GM12878 (cell line): ENCODE measurements at regions of chr9 and their contacts with region 1.

Region 1: GRCh38 chr9:100216178-100216787 is 117.2 kb downstream of the INVS start:
- DNase-seq: peak; percentile 40
- ATAC-seq: peak; percentile 96
- H3K4me3 ChIP-seq: no peak overlapping the region
- H3K27ac ChIP-seq: no peak overlapping the region
- H3K4me1 ChIP-seq: peaks cover 17% of the 10 kb centered on the region
- H3K27me3 ChIP-seq: no peaks in the 10 kb centered on the region
- CTCF ChIP-seq: peak; percentile 75 to 79 (median 77)
- EP300 ChIP-seq: no peak
- POLR2A ChIP-seq: no peak
- RAD21 ChIP-seq: peak; percentile 88

Region 2: DNA sequence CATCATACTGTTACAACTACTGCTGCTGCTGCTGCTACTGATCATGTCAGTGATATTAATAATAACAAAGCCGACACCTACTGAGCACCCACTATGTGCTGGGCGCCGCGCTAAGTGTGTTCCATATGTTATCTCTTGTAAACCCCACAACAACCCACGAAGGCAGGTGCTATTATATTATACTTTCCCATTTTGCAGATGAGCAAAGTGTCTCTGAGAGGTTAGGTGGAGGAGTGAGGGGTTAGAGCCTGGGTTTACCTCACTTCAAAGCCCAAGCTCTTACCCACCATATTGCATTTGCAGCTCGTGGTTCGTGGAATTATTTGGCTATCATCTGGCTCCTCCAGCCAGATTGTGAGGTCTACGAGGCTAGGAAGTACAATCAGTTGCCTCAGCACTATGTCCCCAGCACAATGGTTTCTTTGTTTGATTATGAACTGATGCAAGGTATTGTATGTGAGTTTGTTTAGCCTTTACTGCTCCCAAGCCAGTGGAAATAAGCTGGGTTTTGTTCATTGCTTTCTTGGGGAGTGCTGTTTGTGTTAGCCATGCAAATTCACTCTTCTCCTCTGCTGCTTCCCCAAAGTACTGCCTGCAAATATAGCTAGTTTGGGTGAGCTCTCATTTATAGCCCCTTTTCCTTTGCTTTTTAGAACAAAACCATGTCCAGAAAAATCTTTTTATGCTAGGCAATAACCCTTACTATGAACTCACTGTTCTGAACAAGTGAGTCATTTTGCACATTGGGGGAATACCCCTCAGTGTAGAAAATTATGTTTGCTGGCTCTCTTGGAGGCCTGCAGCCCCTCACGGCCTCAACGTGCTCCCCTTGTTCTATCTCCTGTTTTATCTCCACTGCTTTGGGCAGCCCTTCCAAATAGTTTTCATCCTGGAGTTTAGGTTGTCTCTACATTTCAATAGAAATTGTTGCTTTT is 1042.4 kb before region 1 on chr9:
- CTCF ChIA-PET with region 1: no interaction called
- POLR2A ChIA-PET with region 1: no interaction called
- RAD21 ChIA-PET with region 1: no interaction called
- SMC1A ChIA-PET with region 1: no interaction called
- in situ Hi-C with region 1: loop called (anchors 10 kb)
- intact Hi-C with region 1: loop called (anchors 5 kb)
- DNase-seq: no peak
- ATAC-seq: peak; percentile 81
- H3K4me3 ChIP-seq: no peak overlapping the region
- H3K27ac ChIP-seq: no peak overlapping the region
- H3K4me1 ChIP-seq: peaks cover 8% of the 10 kb centered on the region
- H3K27me3 ChIP-seq: no peaks in the 10 kb centered on the region
- CTCF ChIP-seq: no peak
- EP300 ChIP-seq: no peak
- POLR2A ChIP-seq: no peak
- RAD21 ChIP-seq: no peak

Region 3: DNA sequence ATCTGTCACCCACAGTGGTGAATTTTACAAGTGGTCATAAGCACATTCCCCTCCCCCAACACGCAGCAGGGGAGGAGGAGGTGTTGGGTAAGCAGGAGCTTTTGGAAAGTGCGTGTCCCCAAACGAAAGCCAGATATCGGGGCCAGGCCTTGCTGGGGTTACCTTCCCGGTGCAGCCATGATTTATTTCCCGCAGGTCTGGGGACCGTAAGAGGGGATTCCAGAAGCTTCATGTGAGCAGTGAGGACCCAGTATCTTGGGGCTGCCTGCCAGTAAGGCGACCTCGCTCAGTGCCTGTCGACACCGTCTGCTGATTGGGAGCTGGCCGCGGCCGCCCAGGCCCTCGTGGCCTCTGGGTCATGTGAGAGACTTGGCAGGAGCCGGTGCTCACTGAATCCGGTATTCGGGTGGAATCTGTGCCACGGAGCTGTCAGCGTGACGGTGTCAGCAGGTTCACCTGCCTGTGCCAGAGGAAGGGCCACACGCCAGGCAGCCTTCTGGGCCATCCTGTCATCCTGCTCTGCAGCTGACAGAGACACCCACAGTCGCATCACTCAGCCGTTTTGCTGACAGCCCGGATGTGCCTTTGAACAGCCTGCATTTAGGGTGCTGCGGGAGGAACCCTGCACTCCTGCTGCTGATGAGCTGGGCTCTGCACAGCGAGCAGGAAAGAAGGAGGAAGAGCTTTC is 956.9 kb before region 1 on chr9:
- CTCF ChIA-PET with region 1: no interaction called
- POLR2A ChIA-PET with region 1: no interaction called
- RAD21 ChIA-PET with region 1: interaction called, 3 read pairs
- SMC1A ChIA-PET with region 1: no interaction called
- in situ Hi-C with region 1: no loop called
- intact Hi-C with region 1: loop called (anchors 10 kb)
- DNase-seq: no peak
- ATAC-seq: no peak
- H3K4me3 ChIP-seq: no peak overlapping the region
- H3K27ac ChIP-seq: peak overlapping the region; percentile 45
- H3K4me1 ChIP-seq: peaks cover 30% of the 10 kb centered on the region
- H3K27me3 ChIP-seq: no peaks in the 10 kb centered on the region
- CTCF ChIP-seq: no peak
- EP300 ChIP-seq: no peak
- POLR2A ChIP-seq: peak; percentile 85
- RAD21 ChIP-seq: no peak

Region 4: DNA sequence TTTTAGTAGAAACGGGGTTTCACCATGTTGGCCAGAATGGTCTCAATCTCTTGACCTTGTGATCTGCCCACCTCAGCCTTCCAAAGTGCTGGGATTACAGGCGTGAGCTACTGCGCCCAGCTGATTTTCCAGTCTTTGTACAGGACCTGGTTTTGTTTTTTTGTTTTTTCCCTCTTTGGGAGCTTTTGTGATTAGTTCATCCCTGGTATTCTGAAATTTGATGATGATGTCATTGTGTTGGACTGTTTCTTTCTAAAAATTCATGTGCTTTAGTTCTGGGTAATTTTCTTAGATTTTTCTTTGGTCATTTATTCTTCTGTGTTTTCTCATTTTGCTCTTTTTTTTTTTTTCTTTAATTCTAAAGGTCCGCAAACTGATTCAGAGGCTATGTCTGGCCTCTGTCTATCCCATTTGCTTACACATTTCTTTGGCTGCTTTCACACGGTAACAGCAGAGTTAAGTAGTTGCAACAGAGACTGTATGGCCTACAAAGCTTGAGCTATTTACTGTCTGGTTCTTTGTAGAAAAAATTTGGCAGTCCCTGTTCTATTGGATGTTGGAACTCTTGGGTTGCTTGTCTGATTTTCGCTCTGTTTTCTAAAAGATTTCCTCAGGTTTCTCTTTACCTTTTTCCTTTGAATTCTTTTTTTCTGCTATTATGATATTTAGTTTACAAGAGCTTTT is 285.0 kb before region 1 on chr9:
- CTCF ChIA-PET with region 1: no interaction called
- POLR2A ChIA-PET with region 1: no interaction called
- RAD21 ChIA-PET with region 1: no interaction called
- SMC1A ChIA-PET with region 1: no interaction called
- in situ Hi-C with region 1: no loop called
- intact Hi-C with region 1: no loop called
- DNase-seq: no peak
- ATAC-seq: no peak
- H3K4me3 ChIP-seq: no peak overlapping the region
- H3K27ac ChIP-seq: no peak overlapping the region
- H3K4me1 ChIP-seq: no peaks in the 10 kb centered on the region
- H3K27me3 ChIP-seq: no peaks in the 10 kb centered on the region
- CTCF ChIP-seq: no peak
- EP300 ChIP-seq: no peak
- POLR2A ChIP-seq: no peak
- RAD21 ChIP-seq: no peak

Region 5: DNA sequence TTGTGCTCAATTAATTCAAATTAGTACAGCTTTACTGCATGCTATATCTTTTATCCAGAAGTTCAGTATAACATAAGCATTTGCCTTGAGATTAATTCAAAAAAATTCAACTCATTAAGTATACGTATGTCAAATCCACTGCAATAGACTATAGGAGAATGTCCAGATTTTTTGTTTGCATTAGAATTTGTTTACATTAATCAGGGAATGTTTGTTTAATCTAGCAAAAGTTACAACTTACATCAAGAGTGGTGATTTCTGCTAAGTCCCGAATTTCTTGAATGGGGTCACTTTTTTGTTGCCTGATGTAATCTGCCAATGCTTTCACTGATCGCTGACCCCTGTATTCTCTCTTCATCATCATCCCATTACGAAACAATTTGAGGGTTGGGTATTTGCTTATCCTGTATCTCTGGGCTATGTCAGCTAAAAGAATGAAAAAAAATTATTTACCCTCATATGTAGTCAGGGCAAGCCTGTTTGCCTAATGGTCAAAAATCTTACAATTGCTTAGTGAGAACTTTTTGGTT is 194.4 kb before region 1 on chr9:
- CTCF ChIA-PET with region 1: interaction called, 143 read pairs
- POLR2A ChIA-PET with region 1: no interaction called
- RAD21 ChIA-PET with region 1: interaction called, 14 read pairs
- SMC1A ChIA-PET with region 1: interaction called, 115 read pairs
- in situ Hi-C with region 1: no loop called
- intact Hi-C with region 1: no loop called
- DNase-seq: no peak
- ATAC-seq: no peak
- H3K4me3 ChIP-seq: no peak overlapping the region
- H3K27ac ChIP-seq: no peak overlapping the region
- H3K4me1 ChIP-seq: no peaks in the 10 kb centered on the region
- H3K27me3 ChIP-seq: no peaks in the 10 kb centered on the region
- CTCF ChIP-seq: no peak
- EP300 ChIP-seq: no peak
- POLR2A ChIP-seq: no peak
- RAD21 ChIP-seq: no peak

Region 6: DNA sequence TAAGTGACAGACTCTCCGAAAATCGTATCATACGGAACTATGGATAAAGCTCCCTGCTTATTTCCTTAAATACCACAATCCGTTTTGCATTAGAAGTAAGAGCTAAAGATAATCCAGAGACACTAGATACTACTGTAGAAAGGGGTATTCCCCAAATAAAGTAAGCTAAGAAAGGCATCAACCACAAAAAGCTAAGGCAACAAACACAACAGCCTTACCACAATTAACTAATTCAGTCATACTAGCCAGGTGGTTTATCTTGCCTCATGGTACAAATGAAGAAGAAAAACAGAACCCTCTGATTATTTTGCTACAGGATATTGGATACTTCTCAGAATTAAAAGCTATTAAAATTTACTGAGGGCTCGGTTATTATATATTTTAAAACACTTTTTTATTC is 131.5 kb before region 1 on chr9:
- CTCF ChIA-PET with region 1: interaction called, 10 read pairs
- POLR2A ChIA-PET with region 1: no interaction called
- RAD21 ChIA-PET with region 1: interaction called, 5 read pairs
- SMC1A ChIA-PET with region 1: interaction called, 3 read pairs
- in situ Hi-C with region 1: no loop called
- intact Hi-C with region 1: no loop called
- DNase-seq: peak; percentile 71
- ATAC-seq: peak; percentile 86
- H3K4me3 ChIP-seq: no peak overlapping the region
- H3K27ac ChIP-seq: peak overlapping the region; percentile 94
- H3K4me1 ChIP-seq: peaks cover 32% of the 10 kb centered on the region
- H3K27me3 ChIP-seq: no peaks in the 10 kb centered on the region
- CTCF ChIP-seq: no peak
- EP300 ChIP-seq: peak; percentile 95 to 99
- POLR2A ChIP-seq: no peak
- RAD21 ChIP-seq: no peak

Region 7: GRCh38 chr9:100098887-100099721 is 117.2 kb before region 1 on chr9 and contains the starts of genes ERP44 and INVS:
- CTCF ChIA-PET with region 1: interaction called, 4 read pairs
- POLR2A ChIA-PET with region 1: no interaction called
- RAD21 ChIA-PET with region 1: interaction called, 4 read pairs
- SMC1A ChIA-PET with region 1: interaction called, 4 read pairs
- in situ Hi-C with region 1: no loop called
- intact Hi-C with region 1: loop called (anchors 5 kb)
- DNase-seq: peak; percentile 97
- ATAC-seq: peak; percentile 98
- H3K4me3 ChIP-seq: peak within 1 kb of the TSS; percentile 99
- H3K27ac ChIP-seq: peak within 1 kb of the TSS; percentile 92
- H3K4me1 ChIP-seq: no peaks in the 10 kb centered on the region
- H3K27me3 ChIP-seq: no peaks in the 10 kb centered on the region
- CTCF ChIP-seq: no peak
- EP300 ChIP-seq: no peak
- POLR2A ChIP-seq: peak; percentile 96
- RAD21 ChIP-seq: 0 out of 2 replicates have a peak, but pooled peaks have one; percentile 1
- polyA plus RNA-seq, gene ERP44: 13.5 to 14.4 TPM
- polyA plus RNA-seq, gene INVS: 0.93 to 1.0 TPM

Region 8: GRCh38 chr9:100322954-100323536 is 106.8 kb after region 1 on chr9:
- CTCF ChIA-PET with region 1: interaction called, 12 read pairs
- POLR2A ChIA-PET with region 1: no interaction called
- RAD21 ChIA-PET with region 1: interaction called, 3 read pairs
- SMC1A ChIA-PET with region 1: interaction called, 3 read pairs
- in situ Hi-C with region 1: no loop called
- intact Hi-C with region 1: no loop called
- DNase-seq: no peak
- ATAC-seq: peak; percentile 69
- H3K4me3 ChIP-seq: no peak overlapping the region
- H3K27ac ChIP-seq: no peak overlapping the region
- H3K4me1 ChIP-seq: no peaks in the 10 kb centered on the region
- H3K27me3 ChIP-seq: no peaks in the 10 kb centered on the region
- CTCF ChIP-seq: peak; percentile 55 to 74 (median 65)
- EP300 ChIP-seq: no peak
- POLR2A ChIP-seq: no peak
- RAD21 ChIP-seq: peak; percentile 65